Left lung (tissue), 14 donors: ENCODE measurements at regions of chr3 and their contacts with region 1.

Region 1: GRCh38 chr3:170811928-170812591 is 57.9 kb downstream of the RPL22L1 start:
- DNase-seq: peak in 3 of 4 donors; percentile 42 to 78 (median 64)
- ATAC-seq: peak; percentile 95
- H3K4me3 ChIP-seq: no peak overlapping the region
- H3K27ac ChIP-seq: no peak overlapping the region
- H3K4me1 ChIP-seq: peaks cover 0 to 3% of the 10 kb centered on the region in 2 donors
- H3K27me3 ChIP-seq: no peaks in the 10 kb centered on the region
- CTCF ChIP-seq: peak; percentile 88

Region 2: GRCh38 chr3:170317954-170318353 is 494.1 kb before region 1 on chr3:
- intact Hi-C with region 1: loop called in 1 of 2 experiments (anchors 10 kb)
- DNase-seq: no peak
- ATAC-seq: no peak
- H3K4me3 ChIP-seq: no peak overlapping the region
- H3K27ac ChIP-seq: no peak overlapping the region
- H3K4me1 ChIP-seq: peaks cover 0 to 6% of the 10 kb centered on the region in 2 donors
- H3K27me3 ChIP-seq: no peaks in the 10 kb centered on the region
- CTCF ChIP-seq: no peak

Region 3: DNA sequence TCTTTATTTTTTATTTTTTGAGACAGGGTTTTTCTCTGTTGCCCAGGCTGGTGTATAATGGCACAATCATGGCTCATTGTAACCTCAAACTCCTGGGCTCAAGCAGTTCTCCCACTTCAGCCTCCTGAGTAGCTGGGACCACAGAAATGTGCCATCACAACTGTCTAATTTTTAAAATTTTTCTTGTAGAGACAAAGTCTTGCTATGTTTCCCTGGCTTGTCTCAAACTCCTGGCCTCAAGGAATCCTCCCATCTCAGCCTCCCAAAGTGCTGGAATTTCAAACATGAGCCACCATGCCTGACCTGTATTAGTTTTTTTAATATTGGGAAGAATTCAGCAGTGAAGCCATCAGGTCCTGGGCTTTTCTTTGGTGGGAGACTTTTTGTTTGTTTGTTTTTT is 407.0 kb before region 1 on chr3:
- intact Hi-C with region 1: loop called in 1 of 2 experiments (anchors 5 kb)
- DNase-seq: no peak
- ATAC-seq: no peak
- H3K4me3 ChIP-seq: no peak overlapping the region
- H3K27ac ChIP-seq: no peak overlapping the region
- H3K4me1 ChIP-seq: no peaks in the 10 kb centered on the region
- H3K27me3 ChIP-seq: no peaks in the 10 kb centered on the region
- CTCF ChIP-seq: no peak

Region 4: DNA sequence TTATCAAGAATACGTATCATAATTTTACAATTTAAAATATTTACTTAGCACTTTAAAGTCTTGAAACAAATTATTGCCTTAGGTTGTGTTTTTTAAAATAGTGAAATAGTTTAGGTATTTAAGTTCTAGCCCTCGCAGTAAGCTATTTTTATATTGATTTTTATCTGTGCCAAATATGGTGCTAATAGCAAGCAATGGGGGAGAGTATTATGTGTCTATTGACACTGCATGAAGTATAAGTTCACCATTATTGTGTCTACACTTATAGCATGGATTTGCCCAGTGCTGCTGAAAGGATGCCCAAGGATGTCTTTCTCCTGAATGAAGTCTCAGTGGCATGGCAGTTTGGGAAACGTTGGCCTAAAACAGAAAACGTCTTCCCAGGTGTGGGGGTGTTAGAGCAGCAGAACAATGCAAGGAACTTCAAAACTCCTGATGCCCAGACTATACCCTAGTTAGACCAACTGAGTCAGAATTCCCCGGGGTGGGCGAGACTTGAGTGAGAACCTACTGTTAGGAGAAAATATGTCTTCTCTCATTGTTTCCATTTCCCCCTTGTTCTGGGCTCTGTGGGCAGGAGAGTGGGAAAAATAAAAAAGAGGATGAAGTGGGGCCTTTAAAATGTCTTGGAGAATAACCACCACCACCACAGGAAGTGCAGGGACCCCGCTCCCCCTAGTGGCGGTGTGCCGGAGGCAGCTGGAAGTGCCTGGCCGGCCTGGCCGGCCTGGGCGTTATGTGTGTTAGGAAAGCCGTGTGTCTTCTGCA is 122.0 kb before region 1 on chr3:
- intact Hi-C with region 1: no loop called
- DNase-seq: peak in 3 of 4 donors; percentile 49 to 88 (median 52)
- ATAC-seq: peak; percentile 96
- H3K4me3 ChIP-seq: no peak overlapping the region
- H3K27ac ChIP-seq: no peak overlapping the region
- H3K4me1 ChIP-seq: peaks cover 0 to 5% of the 10 kb centered on the region in 2 donors
- H3K27me3 ChIP-seq: no peaks in the 10 kb centered on the region
- CTCF ChIP-seq: peak; percentile 57 to 75

Region 5: GRCh38 chr3:170876537-170876936 is 64.5 kb after region 1 on chr3:
- intact Hi-C with region 1: no loop called
- DNase-seq: no peak
- ATAC-seq: no peak
- H3K4me3 ChIP-seq: no peak overlapping the region
- H3K27ac ChIP-seq: no peak overlapping the region
- H3K4me1 ChIP-seq: no peaks in the 10 kb centered on the region
- H3K27me3 ChIP-seq: no peaks in the 10 kb centered on the region
- CTCF ChIP-seq: no peak